ENCODE measurements at regions of chr12 and their contacts with region 1.

Region 1: DNA sequence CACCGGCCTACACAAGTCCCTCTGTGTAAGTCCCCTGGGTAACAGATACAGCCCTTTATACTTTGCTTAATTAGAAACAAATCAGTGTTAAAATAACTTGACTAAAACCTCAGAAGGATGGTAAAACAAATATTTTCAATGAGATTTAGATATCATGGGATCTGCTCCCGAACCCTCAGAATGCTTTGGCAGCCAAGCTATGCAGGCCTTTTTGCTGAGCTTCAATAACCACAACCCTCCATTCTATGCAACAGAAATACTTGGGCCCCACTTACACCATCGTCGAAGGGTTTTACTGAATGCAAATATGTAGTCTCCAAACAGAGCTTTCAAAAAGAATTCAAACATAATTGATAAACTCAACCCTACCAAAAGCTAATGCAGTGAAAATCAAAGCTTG is 29.3 kb upstream of the PITPNM2 start:
- DNase-seq: no peak
- ATAC-seq: no peak
- H3K4me3 ChIP-seq: no peak overlapping the region
- H3K4me3 Mint-ChIP-seq: no peak overlapping the region
- H3K27ac ChIP-seq: no peak overlapping the region
- H3K27ac Mint-ChIP-seq: no peak overlapping the region
- H3K4me1 ChIP-seq: no peaks in the 10 kb centered on the region
- H3K4me1 Mint-ChIP-seq: no peaks in the 10 kb centered on the region
- H3K27me3 ChIP-seq: no peaks in the 10 kb centered on the region
- H3K27me3 Mint-ChIP-seq: no peaks in the 10 kb centered on the region
- CTCF ChIP-seq: no peak

Region 2: DNA sequence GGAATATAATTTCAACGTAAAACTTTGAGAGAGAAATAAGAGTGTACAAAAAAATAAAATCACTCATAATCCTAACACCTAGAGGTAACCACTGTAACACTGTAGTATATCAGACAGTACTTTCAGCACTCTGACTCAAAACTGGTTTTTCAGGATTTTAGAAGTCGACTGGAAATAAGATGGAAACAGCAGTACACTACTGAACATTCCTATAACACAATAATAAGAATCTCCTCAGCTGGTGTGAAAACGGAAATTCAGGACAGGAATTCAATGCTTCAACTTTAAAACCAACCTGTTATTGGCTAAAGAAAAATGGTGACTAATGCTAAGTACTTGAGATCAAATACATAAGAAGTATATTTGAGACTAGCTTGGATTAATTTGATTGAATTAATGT is 16.9 kb before region 1 on chr12:
- intact Hi-C with region 1: loop called (anchors 1 kb)
- DNase-seq: no peak
- ATAC-seq: no peak
- H3K4me3 ChIP-seq: no peak overlapping the region
- H3K4me3 Mint-ChIP-seq: no peak overlapping the region
- H3K27ac ChIP-seq: no peak overlapping the region
- H3K27ac Mint-ChIP-seq: no peak overlapping the region
- H3K4me1 ChIP-seq: no peaks in the 10 kb centered on the region
- H3K4me1 Mint-ChIP-seq: peaks cover 0 to 4% of the 10 kb centered on the region in 2 donors
- H3K27me3 ChIP-seq: no peaks in the 10 kb centered on the region
- H3K27me3 Mint-ChIP-seq: no peaks in the 10 kb centered on the region
- CTCF ChIP-seq: no peak